Tibial artery (tissue), 4 donors: ENCODE measurements at regions of chr17 and their contacts with region 1.

Region 1: DNA sequence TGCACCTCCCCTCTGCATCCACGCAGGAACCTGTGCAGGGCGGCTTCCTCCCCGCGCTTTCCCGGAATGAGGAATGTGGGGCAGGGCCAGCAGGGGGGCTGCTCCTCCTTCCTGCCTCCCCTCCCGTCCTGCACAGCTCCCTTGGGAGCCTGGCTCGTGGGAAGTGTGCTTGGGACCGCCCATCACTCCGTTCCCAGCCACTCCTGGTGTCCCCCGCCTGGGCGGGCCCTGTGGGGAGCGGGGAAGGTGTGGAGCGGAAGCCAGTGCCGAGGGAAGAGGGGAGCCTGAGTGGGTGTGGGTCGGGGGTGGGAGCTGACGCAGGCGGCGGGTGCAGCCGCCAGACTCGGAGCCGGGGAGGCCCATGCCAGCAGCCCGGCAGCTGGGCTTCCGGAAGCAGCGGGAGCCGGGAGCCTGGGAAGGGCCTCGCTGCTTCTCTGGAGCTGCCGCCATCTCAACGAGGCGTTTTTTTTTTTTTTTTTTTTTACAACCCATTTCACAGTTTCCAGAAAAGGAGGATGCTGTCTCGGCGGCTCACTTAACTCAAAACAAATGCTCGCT is 24.1 kb downstream of the BAHCC1 start:
- DNase-seq: peak; percentile 86 to 98
- H3K4me3 ChIP-seq: peak overlapping the region; percentile 49 to 54
- H3K27ac ChIP-seq: peak overlapping the region; percentile 92 to 97
- H3K4me1 ChIP-seq: peaks cover 58 to 78% (median 76%) of the 10 kb centered on the region in 4 donors
- H3K27me3 ChIP-seq: no peaks in the 10 kb centered on the region
- CTCF ChIP-seq: no peak

Region 2: DNA sequence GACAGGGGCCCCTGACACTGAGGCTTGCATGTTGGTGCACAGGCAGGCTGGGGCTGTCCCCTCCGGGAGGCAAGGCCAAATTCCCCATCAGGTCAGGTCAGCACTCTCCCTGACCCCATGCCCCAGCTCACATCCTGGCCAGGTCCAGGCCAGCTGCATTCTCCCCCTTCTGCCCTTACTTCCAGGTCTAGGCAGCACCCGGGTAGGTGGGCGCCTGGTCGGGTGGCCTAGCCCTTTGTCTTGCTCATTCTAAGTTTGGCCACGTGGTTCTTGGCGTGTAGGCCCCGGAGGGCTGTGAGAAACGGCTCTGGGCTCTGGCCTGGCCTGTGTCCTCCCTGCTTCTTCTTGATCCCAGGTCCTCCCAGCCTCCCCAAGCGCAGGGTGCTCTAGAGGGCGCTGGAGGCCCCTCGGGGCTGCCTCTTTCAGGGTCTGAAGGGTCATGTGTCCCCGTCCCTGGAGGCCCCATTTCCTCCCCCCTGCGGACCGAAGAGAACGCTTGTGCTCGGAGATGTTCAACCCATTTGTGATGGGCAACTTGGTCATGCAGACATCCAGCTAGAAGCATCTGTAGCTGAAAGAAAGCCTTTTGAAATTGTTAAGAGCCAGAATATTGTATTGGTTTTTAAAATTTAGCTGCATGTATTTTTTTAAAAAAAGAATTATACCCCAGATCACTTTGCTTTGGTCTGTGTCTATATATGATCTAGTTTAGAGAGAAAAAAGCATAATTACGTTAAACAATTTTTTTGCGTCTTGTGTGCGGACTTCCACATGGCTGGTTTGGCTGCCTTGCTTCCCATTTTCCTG is 17.5 kb before region 1 on chr17:
- intact Hi-C with region 1: loop called (anchors 2 kb)
- DNase-seq: peak in 1 of 2 donors; percentile 79
- H3K4me3 ChIP-seq: peak overlapping the region; percentile 86 to 92
- H3K27ac ChIP-seq: peak overlapping the region; percentile 95 to 99
- H3K4me1 ChIP-seq: peaks cover 5 to 63% (median 57%) of the 10 kb centered on the region in 4 donors
- H3K27me3 ChIP-seq: no peaks in the 10 kb centered on the region
- CTCF ChIP-seq: peak in 1 of 2 experiments; percentile 28